ENCODE measurements at regions of chr16 and their contacts with region 1.

Region 1: GRCh38 chr16:89770367-89770766 is 46.1 kb downstream of the FANCA start:
- DNase-seq: no peak
- ATAC-seq: no peak
- H3K4me3 Mint-ChIP-seq: no peak overlapping the region
- H3K27ac Mint-ChIP-seq: no peak overlapping the region
- H3K4me1 Mint-ChIP-seq: peaks cover 17% of the 10 kb centered on the region
- H3K27me3 Mint-ChIP-seq: no peaks in the 10 kb centered on the region
- CTCF ChIP-seq: no peak

Region 2: DNA sequence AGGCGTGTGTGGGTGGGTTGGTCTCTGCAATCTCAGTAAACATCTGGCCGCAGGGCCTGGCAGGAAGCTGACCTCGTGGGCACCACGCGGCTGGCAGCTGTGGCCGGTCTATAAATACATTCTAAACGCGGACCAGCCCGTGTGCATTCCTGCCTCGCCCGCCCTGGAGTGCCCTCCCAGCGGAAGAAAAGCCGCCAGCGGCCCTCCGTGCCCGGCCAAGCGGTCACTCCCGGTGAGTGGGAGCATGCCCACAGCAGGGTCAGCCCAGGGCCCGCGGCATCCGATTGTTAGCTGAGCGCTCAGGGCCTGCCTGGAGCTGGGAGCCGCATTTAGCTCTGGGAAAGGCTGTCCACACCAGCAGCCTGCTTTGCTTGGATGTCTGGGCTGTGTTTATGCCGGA is 1377.3 kb before region 1 on chr16:
- CTCF ChIA-PET with region 1: no interaction called
- POLR2A ChIA-PET with region 1: no interaction called
- intact Hi-C with region 1: no loop called
- DNase-seq: no peak
- ATAC-seq: no peak
- H3K4me3 Mint-ChIP-seq: no peak overlapping the region
- H3K27ac Mint-ChIP-seq: no peak overlapping the region
- H3K4me1 Mint-ChIP-seq: no peaks in the 10 kb centered on the region
- H3K27me3 Mint-ChIP-seq: peaks cover 22% of the 10 kb centered on the region
- CTCF ChIP-seq: no peak

Region 3: DNA sequence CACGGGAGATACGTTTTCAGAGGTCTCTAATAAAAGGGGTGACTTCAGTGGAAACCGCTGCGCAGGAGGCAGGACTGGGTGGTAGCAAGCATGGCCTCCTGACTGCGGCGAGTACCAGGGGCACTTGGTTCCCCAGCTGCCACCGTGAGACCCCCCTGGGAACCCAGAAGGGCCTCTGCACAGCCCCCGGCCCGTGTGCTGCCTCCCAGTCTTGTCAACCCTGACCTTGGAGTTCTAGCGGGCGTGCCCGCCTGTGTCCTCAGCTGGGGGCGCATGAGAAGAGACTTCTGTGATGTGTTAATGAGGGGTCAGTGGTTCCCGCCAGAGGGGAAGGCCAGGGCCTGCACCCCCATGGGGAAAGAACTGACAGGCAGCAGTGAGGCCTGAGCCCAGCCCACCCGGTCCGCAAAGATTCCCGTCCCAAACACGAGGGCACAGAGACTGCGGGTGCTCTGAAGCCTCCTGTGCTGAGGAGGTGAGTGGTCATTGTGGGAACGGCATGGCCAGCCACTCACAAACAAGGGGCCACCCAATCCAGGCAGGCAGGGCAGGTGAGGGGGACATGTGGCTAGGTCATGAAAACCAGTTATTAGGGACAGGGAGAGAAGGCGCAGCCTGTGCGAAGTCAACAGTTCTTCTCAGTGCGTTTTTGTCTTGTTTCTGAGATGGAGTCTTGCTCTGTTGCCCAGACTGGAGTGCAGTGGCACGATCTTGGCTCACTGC is 39.6 kb before region 1 on chr16:
- CTCF ChIA-PET with region 1: no interaction called
- POLR2A ChIA-PET with region 1: interaction called, 10 read pairs
- intact Hi-C with region 1: no loop called
- DNase-seq: no peak
- ATAC-seq: no peak
- H3K4me3 Mint-ChIP-seq: no peak overlapping the region
- H3K27ac Mint-ChIP-seq: no peak overlapping the region
- H3K4me1 Mint-ChIP-seq: peaks cover 12% of the 10 kb centered on the region
- H3K27me3 Mint-ChIP-seq: no peaks in the 10 kb centered on the region
- CTCF ChIP-seq: no peak